Mucosa of descending colon (tissue), 3 donors: ENCODE measurements at regions of chr11 and their contacts with region 1.

Region 1: DNA sequence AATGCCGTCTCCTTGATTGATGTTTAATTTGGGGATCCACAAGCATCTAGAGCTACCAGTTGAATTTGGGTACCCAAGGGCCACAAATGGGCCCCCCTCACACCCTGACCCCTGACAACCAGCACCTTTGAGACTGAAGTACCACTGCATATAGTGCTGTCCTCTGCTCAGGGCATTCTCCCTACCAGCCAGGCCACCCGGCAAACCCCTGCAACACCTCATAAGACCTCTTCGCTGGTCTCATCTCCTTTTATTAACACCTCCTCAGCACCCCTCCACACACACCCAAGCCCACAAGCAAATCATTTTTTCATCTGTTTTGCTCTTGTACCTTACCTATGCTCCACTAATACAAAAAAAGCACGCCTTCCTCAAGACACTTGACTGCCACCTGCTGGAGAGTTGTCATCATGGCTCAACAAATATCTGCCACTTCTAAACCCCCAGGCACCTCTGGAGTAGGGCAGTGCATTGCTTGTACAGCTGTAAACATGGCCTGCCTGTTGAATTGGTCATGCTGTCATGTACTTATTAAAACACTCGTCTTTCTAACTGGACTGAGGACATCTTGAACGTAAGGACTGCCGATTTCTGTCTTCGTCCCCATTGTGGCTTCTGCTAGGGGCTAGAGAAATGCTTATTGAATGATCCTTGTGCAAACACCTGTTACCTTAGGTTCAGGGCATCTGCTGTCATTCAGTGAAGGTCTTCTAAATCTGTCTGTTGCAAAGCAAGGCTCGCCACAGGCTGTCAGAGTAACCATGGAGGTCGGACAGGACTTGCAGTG is 66.5 kb downstream of the BMAL1 start:
- DNase-seq: peak in 1 of 3 donors; percentile 88
- ATAC-seq: peak; percentile 75
- H3K4me3 ChIP-seq: no peak overlapping the region
- H3K4me1 ChIP-seq: peaks cover 8% of the 10 kb centered on the region
- CTCF ChIP-seq: peak; percentile 73

Region 2: DNA sequence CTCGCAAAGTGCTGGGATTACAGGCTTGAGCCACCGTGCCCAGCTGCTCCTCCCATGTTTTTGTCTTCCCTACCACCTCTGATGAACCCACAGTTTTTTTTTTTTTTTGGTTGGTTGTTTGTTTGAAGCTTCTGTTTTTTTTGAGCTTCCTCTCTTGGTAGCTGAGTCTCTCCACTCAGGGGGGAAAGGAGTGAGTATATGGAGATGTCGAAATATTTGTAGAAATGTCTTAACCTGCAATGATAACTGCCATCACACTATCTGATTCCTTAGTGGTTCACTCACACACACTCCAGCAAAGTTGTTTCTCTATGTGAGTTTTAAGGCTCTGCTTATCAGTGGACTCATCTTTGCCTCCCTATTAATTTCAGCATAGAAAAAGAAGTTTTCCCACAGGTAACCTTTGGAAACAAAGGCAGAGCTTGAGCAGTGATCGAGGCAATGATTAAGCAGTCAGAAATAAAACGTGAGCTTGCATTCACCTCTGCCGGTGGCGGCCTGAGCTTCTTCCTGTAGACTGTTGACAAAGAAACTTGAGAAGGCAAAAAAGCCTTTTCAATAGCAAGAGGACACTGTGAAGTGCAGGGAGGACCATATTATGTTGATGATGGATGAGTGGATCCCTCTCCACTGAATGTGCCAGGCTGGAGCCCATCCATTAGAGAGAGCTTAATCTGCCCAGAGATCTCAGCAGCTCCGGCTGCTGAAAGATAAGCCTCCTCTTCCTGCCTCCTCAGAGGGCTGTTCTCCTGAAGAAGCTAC is 364.0 kb before region 1 on chr11:
- intact Hi-C with region 1: loop called in 1 of 2 experiments (anchors 10 kb)
- DNase-seq: no peak
- ATAC-seq: no peak
- H3K4me3 ChIP-seq: no peak overlapping the region
- H3K4me1 ChIP-seq: no peaks in the 10 kb centered on the region
- CTCF ChIP-seq: no peak

Region 3: DNA sequence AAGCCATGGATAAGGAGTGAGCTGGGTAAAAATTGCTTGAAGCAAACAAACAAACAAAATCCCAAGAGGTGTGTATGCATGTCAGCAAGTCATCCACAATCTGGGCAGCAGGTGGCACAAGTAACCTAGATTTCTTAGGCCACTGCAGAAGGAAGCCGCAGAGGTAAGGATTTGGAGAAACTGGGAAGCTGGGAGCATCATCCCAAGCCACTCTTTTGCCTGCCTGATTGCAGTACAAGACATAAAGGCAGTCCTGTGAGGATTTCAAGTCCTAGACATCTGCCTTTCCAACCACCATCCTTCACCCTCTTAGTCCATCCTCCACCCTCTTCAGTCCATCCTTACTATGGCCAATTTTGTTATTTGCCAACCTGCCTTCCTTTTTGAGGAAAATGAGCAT is 133.7 kb before region 1 on chr11:
- intact Hi-C with region 1: loop called (anchors 5 to 10 kb)
- DNase-seq: peak in 2 of 3 donors; percentile 69 to 84
- ATAC-seq: peak; percentile 57
- H3K4me3 ChIP-seq: no peak overlapping the region
- H3K4me1 ChIP-seq: no peaks in the 10 kb centered on the region
- CTCF ChIP-seq: peak; percentile 41